ENCODE measurements at regions of chr22 and their contacts with region 1.

Region 1: GRCh38 chr22:36977947-36978660 is 41.1 kb downstream of the TST start:
- DNase-seq: peak; percentile 91
- H3K4me3 Mint-ChIP-seq: peak overlapping the region; percentile 72
- H3K27ac Mint-ChIP-seq: peak overlapping the region; percentile 58
- H3K4me1 Mint-ChIP-seq: peaks cover 14% of the 10 kb centered on the region
- H3K27me3 Mint-ChIP-seq: peaks cover 85% of the 10 kb centered on the region
- CTCF ChIP-seq: peak; percentile 91

Region 2: GRCh38 chr22:36659762-36660509 is 318.2 kb before region 1 on chr22:
- CTCF ChIA-PET with region 1: no interaction called
- intact Hi-C with region 1: no loop called
- DNase-seq: peak; percentile 96
- H3K4me3 Mint-ChIP-seq: peak overlapping the region; percentile 67
- H3K27ac Mint-ChIP-seq: peak overlapping the region; percentile 83
- H3K4me1 Mint-ChIP-seq: peaks cover 43% of the 10 kb centered on the region
- H3K27me3 Mint-ChIP-seq: peaks cover 23% of the 10 kb centered on the region
- CTCF ChIP-seq: no peak

Region 3: DNA sequence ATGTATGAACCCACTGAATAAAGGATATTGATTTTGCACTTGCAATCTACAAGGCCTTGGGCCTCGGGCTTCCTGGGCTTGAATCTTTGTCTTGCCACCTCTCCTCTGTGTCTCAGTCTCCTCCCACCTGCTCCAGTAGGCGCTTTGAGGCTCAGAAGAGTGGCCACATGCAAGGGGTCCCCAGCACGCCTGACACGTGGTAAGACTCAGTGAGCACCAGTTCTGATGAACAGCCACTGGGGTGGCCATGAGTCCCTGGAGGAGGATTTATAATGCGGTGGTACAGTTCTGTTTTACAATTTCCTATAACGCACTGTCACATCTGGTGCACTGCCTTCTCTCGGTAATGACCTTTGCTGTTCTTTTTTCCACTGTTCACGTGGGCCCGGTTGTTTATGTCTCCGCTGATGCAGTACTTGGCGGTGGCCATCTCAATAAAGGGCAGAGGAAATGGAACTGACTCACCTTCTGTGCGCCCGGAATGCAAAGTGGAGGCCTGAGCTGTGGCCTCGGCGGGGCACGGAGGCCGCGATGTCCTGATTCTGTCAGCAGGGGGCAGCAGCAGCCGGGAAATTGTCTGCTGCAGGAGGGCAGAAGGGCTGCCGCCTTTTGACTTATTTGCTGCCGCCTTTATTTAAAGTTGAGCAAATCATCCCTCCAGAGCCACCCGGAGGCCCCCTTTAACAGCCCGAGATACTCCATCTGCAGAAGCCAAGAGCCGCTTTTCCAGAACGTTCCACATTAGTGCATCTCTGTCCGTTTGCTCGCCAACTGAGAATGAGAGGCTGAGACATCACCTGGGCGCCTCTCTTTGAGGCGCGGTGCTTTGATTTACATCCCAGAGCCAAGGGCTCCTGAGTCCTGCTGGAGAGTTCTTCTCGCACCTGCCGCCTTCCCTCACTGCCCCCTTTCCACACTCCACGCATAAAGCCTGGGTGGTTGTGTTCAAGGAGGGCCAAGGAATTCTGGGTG is 196.2 kb before region 1 on chr22:
- CTCF ChIA-PET with region 1: interaction called, 8 read pairs
- intact Hi-C with region 1: loop called (anchors 2 kb)
- DNase-seq: peak; percentile 89
- H3K4me3 Mint-ChIP-seq: no peak overlapping the region
- H3K27ac Mint-ChIP-seq: no peak overlapping the region
- H3K4me1 Mint-ChIP-seq: no peaks in the 10 kb centered on the region
- H3K27me3 Mint-ChIP-seq: peaks cover 75% of the 10 kb centered on the region
- CTCF ChIP-seq: peak; percentile 95

Region 4: GRCh38 chr22:36873680-36874537 is 104.2 kb before region 1 on chr22:
- CTCF ChIA-PET with region 1: interaction called, 16 read pairs
- intact Hi-C with region 1: loop called (anchors 5 kb)
- DNase-seq: peak; percentile 59
- H3K4me3 Mint-ChIP-seq: no peak overlapping the region
- H3K27ac Mint-ChIP-seq: peak overlapping the region; percentile 42
- H3K4me1 Mint-ChIP-seq: peaks cover 28% of the 10 kb centered on the region
- H3K27me3 Mint-ChIP-seq: peaks cover 31% of the 10 kb centered on the region
- CTCF ChIP-seq: peak; percentile 60

Measured in Calu3 (cell line).